CD4-positive, alpha-beta T cell (primary cell): ENCODE measurements at regions of chr21 and their contacts with region 1.

Region 1: GRCh38 chr21:42117229-42117966 is 46.3 kb downstream of the UMODL1 start:
- DNase-seq: peak; percentile 55 to 86 (median 72)
- ATAC-seq: peak; percentile 92
- H3K4me3 ChIP-seq: no peak overlapping the region
- H3K4me3 Mint-ChIP-seq: no peak overlapping the region
- H3K27ac ChIP-seq: no peak overlapping the region
- H3K27ac Mint-ChIP-seq: no peak overlapping the region
- H3K4me1 ChIP-seq: peaks cover 20% of the 10 kb centered on the region
- H3K4me1 Mint-ChIP-seq: peaks cover 21% of the 10 kb centered on the region
- H3K27me3 ChIP-seq: peaks cover 39 to 47% of the 10 kb centered on the region in 2 experiments
- H3K27me3 Mint-ChIP-seq: peaks cover 57% of the 10 kb centered on the region
- CTCF ChIP-seq: peak; percentile 97

Region 2: GRCh38 chr21:41612674-41613532 is 504.5 kb before region 1 on chr21:
- CTCF ChIA-PET with region 1: interaction called, 5 read pairs
- POLR2A ChIA-PET with region 1: no interaction called
- intact Hi-C with region 1: loop called in 1 of 2 experiments (anchors 5 kb)
- DNase-seq: peak in 3 of 14 experiments; percentile 10 to 27 (median 23)
- ATAC-seq: no peak
- H3K4me3 ChIP-seq: no peak overlapping the region
- H3K4me3 Mint-ChIP-seq: no peak overlapping the region
- H3K27ac ChIP-seq: no peak overlapping the region
- H3K27ac Mint-ChIP-seq: no peak overlapping the region
- H3K4me1 ChIP-seq: no peaks in the 10 kb centered on the region
- H3K4me1 Mint-ChIP-seq: no peaks in the 10 kb centered on the region
- H3K27me3 ChIP-seq: peaks cover 7 to 10% of the 10 kb centered on the region in 2 experiments
- H3K27me3 Mint-ChIP-seq: peaks cover 43% of the 10 kb centered on the region
- CTCF ChIP-seq: no peak

Region 3: GRCh38 chr21:41766561-41767330 is 350.7 kb before region 1 on chr21 and contains the start of gene RIPK4:
- CTCF ChIA-PET with region 1: no interaction called
- POLR2A ChIA-PET with region 1: no interaction called
- intact Hi-C with region 1: no loop called
- DNase-seq: peak; percentile 26 to 81 (median 54)
- ATAC-seq: peak; percentile 65
- H3K4me3 ChIP-seq: peak within 1 kb of the TSS; percentile 48
- H3K4me3 Mint-ChIP-seq: peak within 1 kb of the TSS; percentile 86
- H3K27ac ChIP-seq: no peak within 1 kb of the TSS
- H3K27ac Mint-ChIP-seq: peak within 1 kb of the TSS; percentile 15
- H3K4me1 ChIP-seq: peaks cover 38% of the 10 kb centered on the region
- H3K4me1 Mint-ChIP-seq: peaks cover 37% of the 10 kb centered on the region
- H3K27me3 ChIP-seq: peaks cover 50 to 72% of the 10 kb centered on the region in 2 experiments
- H3K27me3 Mint-ChIP-seq: peaks cover 85% of the 10 kb centered on the region
- CTCF ChIP-seq: no peak
- total RNA-seq, gene RIPK4: 2.5 to 3.0 TPM

Region 4: GRCh38 chr21:41816220-41817165 is 300.9 kb before region 1 on chr21:
- CTCF ChIA-PET with region 1: interaction called, 28 read pairs
- POLR2A ChIA-PET with region 1: interaction called, 3 read pairs
- intact Hi-C with region 1: loop called in 1 of 2 experiments (anchors 1 kb)
- DNase-seq: peak; percentile 44 to 77 (median 53)
- ATAC-seq: peak; percentile 80
- H3K4me3 ChIP-seq: no peak overlapping the region
- H3K4me3 Mint-ChIP-seq: no peak overlapping the region
- H3K27ac ChIP-seq: no peak overlapping the region
- H3K27ac Mint-ChIP-seq: no peak overlapping the region
- H3K4me1 ChIP-seq: peaks cover 4% of the 10 kb centered on the region
- H3K4me1 Mint-ChIP-seq: no peaks in the 10 kb centered on the region
- H3K27me3 ChIP-seq: no peaks in the 10 kb centered on the region
- H3K27me3 Mint-ChIP-seq: no peaks in the 10 kb centered on the region
- CTCF ChIP-seq: peak; percentile 71

Region 5: DNA sequence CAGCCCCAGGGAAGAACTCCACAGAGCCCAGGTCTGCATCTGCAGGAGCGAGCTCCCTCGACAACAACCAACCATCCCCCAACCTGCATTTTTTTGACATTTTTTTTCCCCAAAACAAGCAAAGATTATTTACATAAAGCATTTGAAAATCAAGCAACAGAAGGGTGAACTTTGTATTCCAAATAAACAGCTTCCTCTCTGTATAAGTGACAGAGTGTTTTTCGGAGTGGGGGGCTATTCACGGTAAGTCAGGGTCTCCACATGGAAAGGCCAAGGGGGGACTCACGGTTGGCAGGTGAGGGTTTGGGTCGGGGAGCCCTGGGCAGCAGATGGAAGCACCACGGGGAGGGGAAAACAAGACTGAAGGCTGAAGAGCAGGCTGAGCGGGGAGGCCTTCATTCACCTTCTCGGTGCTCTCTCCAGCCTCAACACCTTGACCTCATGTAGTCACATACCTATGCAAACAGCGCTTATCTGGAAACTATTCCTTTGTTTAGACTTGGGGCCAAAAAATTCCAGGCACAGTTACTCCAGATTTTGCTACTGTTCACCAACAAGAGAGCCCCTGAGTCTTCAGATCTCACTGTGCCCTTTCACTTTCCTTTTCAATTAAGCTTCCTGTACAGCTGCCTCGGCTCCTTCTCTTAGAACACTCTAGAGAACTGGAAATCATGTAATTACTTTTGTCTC is 191.1 kb before region 1 on chr21:
- CTCF ChIA-PET with region 1: interaction called, 7 read pairs
- POLR2A ChIA-PET with region 1: interaction called, 8 read pairs
- intact Hi-C with region 1: loop called in 1 of 2 experiments (anchors 2 kb)
- DNase-seq: peak in 11 of 14 experiments; percentile 1 to 80 (median 22)
- ATAC-seq: peak; percentile 92
- H3K4me3 ChIP-seq: peak overlapping the region; percentile 67
- H3K4me3 Mint-ChIP-seq: peak overlapping the region; percentile 90
- H3K27ac ChIP-seq: peak overlapping the region; percentile 75 to 83
- H3K27ac Mint-ChIP-seq: peak overlapping the region; percentile 95
- H3K4me1 ChIP-seq: peaks cover 52% of the 10 kb centered on the region
- H3K4me1 Mint-ChIP-seq: peaks cover 55% of the 10 kb centered on the region
- H3K27me3 ChIP-seq: no peaks in the 10 kb centered on the region
- H3K27me3 Mint-ChIP-seq: no peaks in the 10 kb centered on the region
- CTCF ChIP-seq: no peak

Region 6: GRCh38 chr21:42080788-42081083 is 36.7 kb before region 1 on chr21:
- CTCF ChIA-PET with region 1: no interaction called
- POLR2A ChIA-PET with region 1: no interaction called
- intact Hi-C with region 1: no loop called
- DNase-seq: peak in 2 of 14 experiments; percentile 48 to 59
- ATAC-seq: no peak
- H3K4me3 ChIP-seq: no peak overlapping the region
- H3K4me3 Mint-ChIP-seq: no peak overlapping the region
- H3K27ac ChIP-seq: no peak overlapping the region
- H3K27ac Mint-ChIP-seq: no peak overlapping the region
- H3K4me1 ChIP-seq: no peaks in the 10 kb centered on the region
- H3K4me1 Mint-ChIP-seq: no peaks in the 10 kb centered on the region
- H3K27me3 ChIP-seq: no peaks in the 10 kb centered on the region
- H3K27me3 Mint-ChIP-seq: no peaks in the 10 kb centered on the region
- CTCF ChIP-seq: no peak